Right cardiac atrium (tissue), 5 donors: ENCODE measurements at regions of chr7 and their contacts with region 1.

Region 1: GRCh38 chr7:39746103-39746819 is 122.9 kb downstream of the RALA start:
- DNase-seq: peak; percentile 78 to 87 (median 82)
- ATAC-seq: peak; percentile 75 to 88
- H3K4me3 ChIP-seq: no peak overlapping the region
- H3K27ac ChIP-seq: no peak overlapping the region
- H3K4me1 ChIP-seq: no peaks in the 10 kb centered on the region
- H3K27me3 ChIP-seq: no peaks in the 10 kb centered on the region

Region 2: DNA sequence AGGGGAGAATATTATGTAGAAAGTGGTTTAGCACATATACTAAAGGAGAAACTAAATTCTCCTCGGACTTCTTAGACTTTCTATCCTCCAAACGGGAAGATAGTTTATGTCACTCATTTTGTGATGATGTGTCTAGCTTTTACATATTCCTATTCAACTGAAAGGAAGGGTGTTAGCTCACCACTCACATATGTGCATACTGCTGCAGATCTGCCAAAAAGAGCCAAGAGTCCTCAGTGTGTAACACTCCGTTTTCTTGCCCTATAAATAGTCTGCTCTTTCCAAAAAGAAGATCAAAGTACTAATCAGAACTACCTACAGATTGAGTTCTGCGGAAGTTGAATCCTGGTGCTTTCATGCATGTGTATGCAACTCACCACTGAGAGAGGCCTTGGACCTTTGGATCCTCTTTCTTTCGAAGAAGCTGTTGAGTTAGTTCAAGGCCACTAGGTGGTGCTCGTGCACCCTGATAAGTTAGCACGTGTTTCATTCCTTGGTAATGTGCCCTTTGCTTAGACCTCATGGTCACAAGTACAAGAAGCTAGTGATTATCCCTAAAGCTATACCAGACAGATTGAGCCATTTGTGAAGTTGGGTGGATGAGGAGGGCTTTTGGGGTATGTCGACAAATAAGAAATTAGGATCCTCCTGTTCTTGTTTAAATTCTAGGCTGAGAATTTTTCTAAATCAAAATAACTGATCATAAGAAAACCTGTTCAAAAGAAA is 165.9 kb before region 1 on chr7:
- intact Hi-C with region 1: loop called (anchors 2 to 5 kb)
- DNase-seq: peak; percentile 72 to 80 (median 78)
- ATAC-seq: peak; percentile 89 to 92
- H3K4me3 ChIP-seq: no peak overlapping the region
- H3K27ac ChIP-seq: no peak overlapping the region
- H3K4me1 ChIP-seq: no peaks in the 10 kb centered on the region
- H3K27me3 ChIP-seq: no peaks in the 10 kb centered on the region

Region 3: GRCh38 chr7:40348124-40348728 is 602.0 kb after region 1 on chr7:
- intact Hi-C with region 1: no loop called
- DNase-seq: peak in 1 of 3 donors; percentile 21
- ATAC-seq: no peak
- H3K4me3 ChIP-seq: no peak overlapping the region
- H3K27ac ChIP-seq: no peak overlapping the region
- H3K4me1 ChIP-seq: no peaks in the 10 kb centered on the region
- H3K27me3 ChIP-seq: no peaks in the 10 kb centered on the region